Endothelial cell of umbilical vein (primary cell): ENCODE measurements at regions of chr11 and their contacts with region 1.

Region 1: GRCh38 chr11:44095506-44096394 is at the start of gene EXT2:
- DNase-seq: peak; percentile 84
- H3K4me3 ChIP-seq: peak within 1 kb of the TSS; percentile 49 to 75 (median 62)
- H3K27ac ChIP-seq: no peak within 1 kb of the TSS
- H3K4me1 ChIP-seq: peaks cover 13% of the 10 kb centered on the region
- H3K27me3 ChIP-seq: peaks cover 21 to 27% of the 10 kb centered on the region in 2 experiments
- CTCF ChIP-seq: peak; percentile 89 to 94
- POLR2A ChIP-seq: peak; percentile 50
- total RNA-seq, gene EXT2: 50.9 and 65.1 TPM in 2 replicates

Region 2: GRCh38 chr11:43944761-43945311 is 150.9 kb before region 1 on chr11:
- CTCF ChIA-PET with region 1: interaction called, 12 read pairs
- POLR2A ChIA-PET with region 1: interaction called, 3 read pairs
- dilution Hi-C with region 1: no loop called
- intact Hi-C with region 1: no loop called
- DNase-seq: peak; percentile 51
- H3K4me3 ChIP-seq: no peak overlapping the region
- H3K27ac ChIP-seq: no peak overlapping the region
- H3K4me1 ChIP-seq: peaks cover 13% of the 10 kb centered on the region
- H3K27me3 ChIP-seq: peaks cover 15 to 32% of the 10 kb centered on the region in 2 experiments
- CTCF ChIP-seq: peak; percentile 82 to 87
- POLR2A ChIP-seq: no peak

Region 3: GRCh38 chr11:44071157-44071556 is 24.6 kb before region 1 on chr11:
- CTCF ChIA-PET with region 1: interaction called, 26 read pairs
- POLR2A ChIA-PET with region 1: no interaction called
- dilution Hi-C with region 1: no loop called
- intact Hi-C with region 1: loop called (anchors 1 kb)
- DNase-seq: no peak
- H3K4me3 ChIP-seq: no peak overlapping the region
- H3K27ac ChIP-seq: no peak overlapping the region
- H3K4me1 ChIP-seq: peaks cover 5% of the 10 kb centered on the region
- H3K27me3 ChIP-seq: no peaks in the 10 kb centered on the region
- CTCF ChIP-seq: no peak
- POLR2A ChIP-seq: no peak

Region 4: DNA sequence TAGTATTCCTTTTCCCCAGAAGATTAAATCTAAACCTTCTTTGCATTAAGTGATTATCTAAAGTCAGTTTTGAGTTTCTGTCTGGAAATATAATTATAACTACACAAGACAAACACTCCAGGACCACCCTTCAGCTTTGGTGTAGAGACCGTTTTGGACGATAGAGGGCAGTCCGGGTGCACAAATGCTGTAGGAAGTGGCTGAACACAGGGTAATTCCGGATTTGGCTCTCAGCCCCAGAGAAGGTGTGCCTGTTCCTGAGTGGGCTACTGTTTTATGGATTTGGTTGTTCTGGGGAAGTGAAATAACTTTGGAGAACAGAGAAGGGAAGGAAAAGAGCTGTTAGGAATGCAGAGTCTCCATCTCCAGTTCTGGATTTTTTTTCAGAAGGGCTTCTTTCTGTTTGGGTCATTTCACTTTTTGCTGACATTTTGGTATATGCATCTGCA is 14.5 kb after region 1 on chr11:
- CTCF ChIA-PET with region 1: interaction called, 112 read pairs
- POLR2A ChIA-PET with region 1: no interaction called
- dilution Hi-C with region 1: no loop called
- intact Hi-C with region 1: loop called (anchors 1 kb)
- DNase-seq: peak; percentile 74
- H3K4me3 ChIP-seq: no peak overlapping the region
- H3K27ac ChIP-seq: no peak overlapping the region
- H3K4me1 ChIP-seq: no peaks in the 10 kb centered on the region
- H3K27me3 ChIP-seq: no peaks in the 10 kb centered on the region
- CTCF ChIP-seq: peak; percentile 76 to 79
- POLR2A ChIP-seq: no peak

Region 5: GRCh38 chr11:44125598-44125997 is 29.8 kb after region 1 on chr11:
- CTCF ChIA-PET with region 1: interaction called, 11 read pairs
- POLR2A ChIA-PET with region 1: no interaction called
- dilution Hi-C with region 1: no loop called
- intact Hi-C with region 1: no loop called
- DNase-seq: peak; percentile 41
- H3K4me3 ChIP-seq: no peak overlapping the region
- H3K27ac ChIP-seq: peak overlapping the region; percentile 15
- H3K4me1 ChIP-seq: peaks cover 5% of the 10 kb centered on the region
- H3K27me3 ChIP-seq: no peaks in the 10 kb centered on the region
- CTCF ChIP-seq: no peak
- POLR2A ChIP-seq: no peak

Region 6: DNA sequence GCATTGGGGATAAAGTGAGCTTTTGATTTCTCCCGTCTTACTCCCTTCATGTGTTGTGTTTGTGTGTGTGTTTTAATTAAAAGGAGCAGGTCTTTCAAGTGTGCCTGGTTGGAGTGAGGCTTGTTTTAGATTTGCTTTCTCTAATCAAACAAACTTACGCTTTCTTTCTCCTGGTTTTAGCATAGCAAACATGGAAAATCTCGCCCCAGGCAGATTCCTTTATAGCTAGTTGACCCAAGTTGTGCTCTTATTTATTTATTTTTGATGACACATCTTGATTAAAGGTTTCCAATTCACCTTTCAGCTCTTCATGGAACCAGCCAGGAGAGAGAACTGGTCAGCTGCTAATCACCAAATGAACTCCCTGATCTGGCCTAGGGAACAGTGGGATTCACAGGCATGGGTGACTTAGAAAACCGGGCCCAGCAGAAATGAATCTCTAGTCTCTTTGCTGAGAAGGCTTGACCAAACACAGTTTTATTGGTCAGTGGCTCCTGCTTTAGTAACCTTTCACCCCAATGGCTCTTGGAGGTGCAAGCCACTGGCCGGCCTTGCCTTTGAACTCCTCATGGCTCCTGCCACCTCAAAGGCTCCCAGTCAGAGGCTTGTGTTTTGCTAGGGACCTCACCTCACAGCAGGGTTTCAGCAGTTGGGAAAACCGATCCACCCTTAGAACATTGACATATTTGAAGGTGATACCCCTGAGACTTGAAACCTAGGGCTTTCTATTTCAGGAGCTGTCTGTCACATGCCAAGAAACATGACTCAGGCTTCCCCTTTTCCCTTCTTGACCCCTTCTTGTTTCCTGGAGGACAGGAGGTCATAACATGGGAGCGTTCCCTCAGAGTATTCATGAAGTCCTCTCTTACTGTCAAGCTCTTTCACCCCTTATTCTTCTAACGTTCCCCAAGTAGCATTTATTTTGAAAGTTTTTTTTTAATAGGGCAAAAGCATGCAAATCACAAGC is 48.5 kb after region 1 on chr11:
- CTCF ChIA-PET with region 1: interaction called, 14 read pairs
- POLR2A ChIA-PET with region 1: no interaction called
- dilution Hi-C with region 1: no loop called
- intact Hi-C with region 1: no loop called
- DNase-seq: peak; percentile 26
- H3K4me3 ChIP-seq: no peak overlapping the region
- H3K27ac ChIP-seq: no peak overlapping the region
- H3K4me1 ChIP-seq: peaks cover 4% of the 10 kb centered on the region
- H3K27me3 ChIP-seq: no peaks in the 10 kb centered on the region
- CTCF ChIP-seq: no peak
- POLR2A ChIP-seq: no peak

Region 7: DNA sequence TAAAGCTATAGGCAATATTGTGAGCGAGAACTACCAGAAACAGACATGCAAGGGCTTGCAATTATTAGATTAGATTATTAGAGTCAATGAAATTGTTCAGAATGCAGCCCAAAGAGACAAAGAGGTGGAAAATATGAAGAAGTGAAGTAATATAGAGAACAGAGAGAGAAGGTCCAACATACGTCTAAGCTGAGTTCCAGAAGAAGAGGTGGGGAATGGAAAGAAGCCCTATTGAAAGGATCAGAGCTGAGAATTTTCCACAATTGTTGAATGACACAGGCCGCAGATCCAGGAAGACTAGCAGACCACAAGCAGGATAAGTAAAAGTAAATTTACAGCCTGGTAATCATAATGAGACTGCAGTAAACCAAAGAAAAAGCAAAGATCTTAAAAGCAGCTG is 92.9 kb after region 1 on chr11:
- CTCF ChIA-PET with region 1: no interaction called
- POLR2A ChIA-PET with region 1: no interaction called
- dilution Hi-C with region 1: no loop called
- intact Hi-C with region 1: no loop called
- DNase-seq: no peak
- H3K4me3 ChIP-seq: no peak overlapping the region
- H3K27ac ChIP-seq: no peak overlapping the region
- H3K4me1 ChIP-seq: no peaks in the 10 kb centered on the region
- H3K27me3 ChIP-seq: no peaks in the 10 kb centered on the region
- CTCF ChIP-seq: no peak
- POLR2A ChIP-seq: no peak

Region 8: GRCh38 chr11:44611687-44612434 is 516.1 kb after region 1 on chr11:
- CTCF ChIA-PET with region 1: interaction called, 13 read pairs
- POLR2A ChIA-PET with region 1: no interaction called
- dilution Hi-C with region 1: no loop called
- intact Hi-C with region 1: no loop called
- DNase-seq: no peak
- H3K4me3 ChIP-seq: no peak overlapping the region
- H3K27ac ChIP-seq: no peak overlapping the region
- H3K4me1 ChIP-seq: peaks cover 9% of the 10 kb centered on the region
- H3K27me3 ChIP-seq: no peaks in the 10 kb centered on the region
- CTCF ChIP-seq: no peak
- POLR2A ChIP-seq: no peak